AG04450 (cell line): ENCODE measurements at regions of chr1 and their contacts with region 1.

Region 1: DNA sequence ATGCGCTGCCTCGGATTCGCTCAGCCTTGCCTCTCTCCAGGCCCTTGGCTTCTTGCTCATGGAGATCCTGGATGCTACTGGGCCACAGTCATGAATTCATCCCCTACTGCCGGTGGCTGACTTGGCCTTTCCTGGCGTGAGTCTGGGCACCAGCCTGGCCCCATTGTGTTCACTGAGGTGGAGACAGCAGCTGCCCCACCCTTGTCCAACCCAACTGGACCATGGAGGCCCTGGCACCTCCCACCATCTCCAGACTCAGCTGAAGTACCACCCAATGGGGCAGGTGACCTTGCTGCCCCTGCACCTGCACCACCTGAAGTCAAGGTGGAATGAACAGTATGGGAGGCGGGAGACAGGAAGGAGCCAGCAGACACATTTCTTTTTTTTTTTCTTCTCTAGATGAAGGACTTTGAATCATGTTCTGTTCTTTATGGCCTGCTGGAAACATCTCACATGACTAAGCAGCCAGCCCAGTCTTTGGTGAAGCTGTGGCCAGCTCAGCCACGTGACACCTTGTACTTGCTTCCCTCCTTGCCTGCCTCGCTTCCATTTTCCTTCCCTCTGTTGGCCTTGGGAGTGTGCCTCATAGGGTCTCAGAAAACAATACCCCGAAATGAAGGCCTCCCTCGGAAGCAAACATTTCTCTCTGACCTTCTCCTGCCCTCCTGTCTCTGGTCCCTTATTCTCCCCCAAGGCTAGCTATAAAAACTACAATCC is 3.8 kb upstream of the SLC30A2 start:
- DNase-seq: no peak
- H3K4me3 ChIP-seq: no peak overlapping the region
- H3K27ac ChIP-seq: no peak overlapping the region
- H3K27me3 ChIP-seq: peaks cover 80% of the 10 kb centered on the region
- CTCF ChIP-seq: no peak

Region 2: GRCh38 chr1:25973610-25974321 is 75.9 kb before region 1 on chr1:
- CTCF ChIA-PET with region 1: no interaction called
- POLR2A ChIA-PET with region 1: no interaction called
- DNase-seq: no peak
- H3K4me3 ChIP-seq: no peak overlapping the region
- H3K27ac ChIP-seq: no peak overlapping the region
- H3K27me3 ChIP-seq: no peaks in the 10 kb centered on the region
- CTCF ChIP-seq: no peak

Region 3: DNA sequence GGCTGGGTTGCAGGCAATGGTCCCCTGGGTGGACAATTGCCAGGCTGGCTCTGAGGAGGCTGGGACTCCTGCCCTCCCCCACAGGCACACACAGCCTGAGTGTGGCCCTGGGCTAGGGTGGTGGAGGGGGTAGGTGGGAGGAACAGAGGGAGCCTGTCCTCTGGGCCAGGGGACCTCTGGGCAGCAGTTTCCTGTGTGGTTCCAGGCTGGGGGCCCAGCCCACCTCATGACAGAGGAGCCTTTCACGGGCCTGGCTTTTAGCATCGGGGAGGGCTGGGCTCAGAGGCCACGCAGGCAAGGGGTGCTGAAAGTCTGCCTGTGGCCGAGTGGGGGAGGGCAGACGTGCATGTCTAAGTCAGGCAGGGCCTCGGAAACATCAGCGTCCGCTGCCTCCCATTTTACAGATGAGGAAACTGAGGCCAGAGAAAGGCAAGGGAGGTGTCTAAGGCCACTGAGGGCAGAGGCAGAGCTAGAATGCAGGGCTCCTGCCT is 21.2 kb before region 1 on chr1:
- CTCF ChIA-PET with region 1: no interaction called
- POLR2A ChIA-PET with region 1: no interaction called
- DNase-seq: no peak
- H3K4me3 ChIP-seq: no peak overlapping the region
- H3K27ac ChIP-seq: no peak overlapping the region
- H3K27me3 ChIP-seq: peaks cover 4% of the 10 kb centered on the region
- CTCF ChIP-seq: no peak

Region 4: GRCh38 chr1:26306290-26307229 is 256.9 kb after region 1 on chr1 and contains the start of gene UBXN11:
- CTCF ChIA-PET with region 1: interaction called, 10 read pairs
- POLR2A ChIA-PET with region 1: no interaction called
- DNase-seq: peak; percentile 81
- H3K4me3 ChIP-seq: peak within 1 kb of the TSS; percentile 93
- H3K27ac ChIP-seq: peak within 1 kb of the TSS; percentile 31
- H3K27me3 ChIP-seq: no peaks in the 10 kb centered on the region
- CTCF ChIP-seq: peak; percentile 4; the same call in 1 of the 2 replicates
- polyA plus RNA-seq, gene UBXN11: 6.1 and 7.0 TPM in 2 replicates